Activated CD4-positive, alpha-beta memory T cell treated with anti-CD3 and anti-CD28 coated beads, Interleukin-2, amount 10 ng/mL, durations not matched to agents 7 days and 5 days (primary cell): ENCODE measurements at regions of chr11 and their contacts with region 1.

Region 1: DNA sequence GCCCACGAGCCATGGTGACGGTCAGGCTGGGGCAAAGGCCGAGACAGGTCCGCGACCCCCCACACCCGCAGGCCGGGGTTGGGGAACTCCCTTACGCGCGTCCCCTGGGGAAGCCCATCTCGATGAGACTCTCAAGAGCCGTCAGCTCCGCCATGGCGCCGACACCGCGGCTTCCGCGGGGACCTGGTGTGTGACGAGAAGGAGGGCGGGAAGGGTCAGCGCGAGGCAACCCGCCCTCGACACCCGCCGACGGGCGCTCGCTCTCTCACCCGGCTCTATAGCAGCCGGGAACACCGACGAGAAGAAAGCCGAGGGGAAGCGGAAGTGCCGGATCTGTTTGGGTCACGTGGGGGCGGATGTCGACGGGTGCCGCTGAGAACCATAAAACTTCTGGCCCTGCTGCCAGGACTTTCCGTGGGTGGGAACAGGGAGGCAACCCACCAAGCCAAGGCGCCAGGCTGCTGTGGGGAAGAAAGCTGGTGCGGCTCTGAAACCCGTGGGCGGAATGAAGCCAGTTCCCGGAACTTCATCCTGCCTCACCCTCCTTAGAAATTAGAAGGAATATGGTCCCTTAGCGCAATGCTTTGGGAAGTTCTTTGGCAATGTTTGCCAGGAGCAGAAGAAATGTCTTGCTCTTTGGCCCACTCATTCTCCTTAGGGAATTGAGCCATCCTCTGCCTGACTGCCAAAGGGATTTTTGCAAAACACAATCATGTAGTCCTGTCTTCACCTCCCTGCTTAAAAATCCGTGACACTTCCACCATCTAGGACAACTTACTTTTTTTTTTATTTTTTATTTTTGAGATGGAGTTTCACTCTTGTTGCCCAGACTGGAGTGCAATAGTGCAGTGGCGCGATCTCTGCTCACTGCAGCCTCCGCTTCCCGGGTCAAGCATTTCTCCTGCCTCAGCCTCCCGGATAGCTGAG is at the start of gene UBXN1:
- DNase-seq: peak; percentile 87
- H3K4me3 Mint-ChIP-seq: peak within 1 kb of the TSS; percentile 88
- H3K27ac Mint-ChIP-seq: peak within 1 kb of the TSS; percentile 78
- H3K4me1 Mint-ChIP-seq: peaks cover 40% of the 10 kb centered on the region
- H3K27me3 Mint-ChIP-seq: no peaks in the 10 kb centered on the region
- total RNA-seq, gene UBXN1: 135 to 139 TPM

Region 2: DNA sequence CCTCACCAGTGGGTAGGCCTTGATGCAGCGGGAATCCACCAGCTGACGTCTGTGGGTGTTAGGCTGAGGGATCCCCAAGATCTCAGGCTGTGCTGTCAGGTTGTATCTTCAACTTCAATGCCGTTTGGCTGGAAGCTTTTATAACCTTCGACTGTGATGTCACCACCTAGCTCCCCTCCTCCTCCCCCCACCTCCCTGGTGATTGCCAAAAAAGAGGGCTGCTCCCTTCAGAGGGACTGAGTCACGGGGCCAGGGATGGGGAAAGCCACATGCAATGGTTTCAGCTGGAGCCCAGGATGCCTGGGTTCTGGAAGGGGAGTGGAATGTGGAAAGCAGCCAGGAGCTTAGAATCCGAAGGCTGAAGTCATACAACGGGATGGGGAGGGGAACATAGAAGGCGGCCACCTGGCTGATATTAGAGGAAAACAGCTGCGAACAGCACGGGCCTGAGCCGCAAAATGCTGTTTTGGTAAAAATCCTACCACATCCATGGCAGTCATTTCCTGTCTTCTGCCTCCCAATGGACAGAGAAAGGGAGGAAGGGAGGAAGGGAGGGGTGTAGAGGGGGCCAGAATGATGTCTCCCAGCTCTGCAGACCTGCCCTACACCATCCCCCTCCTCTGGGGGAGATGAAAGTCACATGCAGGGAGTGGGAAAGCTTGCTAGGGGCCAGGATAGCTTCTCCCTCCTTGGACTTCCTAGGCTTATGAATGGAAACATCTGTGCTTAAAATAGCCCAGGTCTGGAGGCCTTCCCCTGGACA is 10.6 kb after region 1 on chr11 and contains the start of gene LRRN4CL:
- CTCF ChIA-PET with region 1: interaction called, 32 read pairs
- POLR2A ChIA-PET with region 1: interaction called, 6 read pairs
- DNase-seq: no peak
- H3K4me3 Mint-ChIP-seq: no peak within 1 kb of the TSS
- H3K27ac Mint-ChIP-seq: no peak within 1 kb of the TSS
- H3K4me1 Mint-ChIP-seq: peaks cover 3% of the 10 kb centered on the region
- H3K27me3 Mint-ChIP-seq: peaks cover 4% of the 10 kb centered on the region
- total RNA-seq, gene LRRN4CL: 0.18 to 0.20 TPM

Region 3: GRCh38 chr11:62694455-62695167 is 15.6 kb after region 1 on chr11:
- CTCF ChIA-PET with region 1: interaction called, 32 read pairs
- POLR2A ChIA-PET with region 1: interaction called, 6 read pairs
- DNase-seq: peak; percentile 79
- H3K4me3 Mint-ChIP-seq: no peak overlapping the region
- H3K27ac Mint-ChIP-seq: no peak overlapping the region
- H3K4me1 Mint-ChIP-seq: peaks cover 7% of the 10 kb centered on the region
- H3K27me3 Mint-ChIP-seq: no peaks in the 10 kb centered on the region